K562 (cell line): ENCODE measurements at regions of chr5 and their contacts with region 1.

Region 1: GRCh38 chr5:137498736-137499505 is at the start of gene SPOCK1:
- DNase-seq: peak; percentile 67 to 92 (median 88)
- ATAC-seq: peak; percentile 100
- H3K4me3 ChIP-seq: no peak within 1 kb of the TSS
- H3K27ac ChIP-seq: no peak within 1 kb of the TSS
- H3K4me1 ChIP-seq: peaks cover 0 to 6% of the 10 kb centered on the region in 2 experiments; a peak in 1 of 5 replicates
- H3K27me3 ChIP-seq: peaks cover 0 to 3% of the 10 kb centered on the region in 2 experiments; a peak in 1 of 5 replicates
- CTCF ChIP-seq: peak; percentile 46 to 83 (median 75); a peak in 5 of 6 replicates
- EP300 ChIP-seq: no peak
- POLR2A ChIP-seq: no peak
- RAD21 ChIP-seq: peak; percentile 50 to 76; a peak in 3 of 4 replicates
- polyA plus RNA-seq, gene SPOCK1: 0.01 TPM in 1 of 2 experiments, not detected in the other

Region 2: DNA sequence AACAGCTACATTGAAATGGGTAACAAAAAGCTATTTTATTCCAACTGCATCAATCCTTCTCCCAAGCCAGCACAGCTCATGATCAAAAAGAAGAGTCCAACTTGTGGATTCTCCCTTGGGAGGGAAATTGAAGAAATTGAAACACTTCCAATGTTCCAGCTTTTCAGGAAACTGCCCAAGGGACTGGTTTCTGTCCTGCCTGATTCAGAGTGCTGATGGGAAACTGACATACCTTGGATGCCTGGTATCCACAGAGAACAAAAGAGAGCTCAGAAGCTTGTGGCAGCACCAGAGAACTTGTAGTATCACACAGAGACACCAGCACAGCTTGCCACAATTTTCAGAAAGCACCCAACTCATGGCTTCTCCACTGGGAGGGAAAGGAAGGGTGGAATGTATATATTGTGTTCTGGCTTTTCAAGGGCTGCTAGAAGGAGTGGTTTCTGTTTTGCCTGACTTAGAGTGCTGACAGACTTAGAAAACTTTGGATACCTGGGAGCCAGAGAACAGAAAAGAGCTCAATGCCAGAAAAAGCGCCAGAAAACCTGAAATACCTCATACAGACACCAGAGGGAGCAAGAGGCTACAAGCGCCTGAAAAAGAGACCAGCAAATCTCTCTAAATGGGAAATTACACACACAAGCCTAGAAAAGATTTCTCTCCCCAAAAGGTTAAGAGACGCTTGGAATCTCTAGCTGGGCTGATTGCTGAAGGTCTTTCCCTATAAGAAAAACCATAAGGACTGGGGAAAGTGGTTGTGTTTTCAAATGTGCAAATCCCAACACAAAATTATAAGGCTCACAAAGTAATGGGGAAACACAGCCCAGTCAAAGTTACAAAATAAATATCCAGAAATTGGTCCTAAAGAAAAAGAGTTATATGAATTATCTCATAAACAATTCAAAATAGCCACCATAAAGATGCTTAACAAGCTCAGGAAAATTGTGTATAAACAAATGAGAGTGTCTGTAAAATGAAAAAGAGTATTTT is 178.6 kb before region 1 on chr5:
- CTCF ChIA-PET with region 1: interaction called, 7 read pairs
- POLR2A ChIA-PET with region 1: no interaction called
- in situ Hi-C with region 1: no loop called
- intact Hi-C with region 1: loop called (anchors 1 kb)
- DNase-seq: peak; percentile 40 to 54 (median 46)
- ATAC-seq: peak; percentile 36; the same call in 1 of the 3 replicates
- H3K4me3 ChIP-seq: no peak overlapping the region
- H3K27ac ChIP-seq: no peak overlapping the region
- H3K4me1 ChIP-seq: no peaks in the 10 kb centered on the region
- H3K27me3 ChIP-seq: no peaks in the 10 kb centered on the region
- CTCF ChIP-seq: peak; percentile 63 to 72 (median 67)
- EP300 ChIP-seq: no peak
- POLR2A ChIP-seq: no peak
- RAD21 ChIP-seq: peak; percentile 30 to 68; a peak in 3 of 4 replicates

Region 3: DNA sequence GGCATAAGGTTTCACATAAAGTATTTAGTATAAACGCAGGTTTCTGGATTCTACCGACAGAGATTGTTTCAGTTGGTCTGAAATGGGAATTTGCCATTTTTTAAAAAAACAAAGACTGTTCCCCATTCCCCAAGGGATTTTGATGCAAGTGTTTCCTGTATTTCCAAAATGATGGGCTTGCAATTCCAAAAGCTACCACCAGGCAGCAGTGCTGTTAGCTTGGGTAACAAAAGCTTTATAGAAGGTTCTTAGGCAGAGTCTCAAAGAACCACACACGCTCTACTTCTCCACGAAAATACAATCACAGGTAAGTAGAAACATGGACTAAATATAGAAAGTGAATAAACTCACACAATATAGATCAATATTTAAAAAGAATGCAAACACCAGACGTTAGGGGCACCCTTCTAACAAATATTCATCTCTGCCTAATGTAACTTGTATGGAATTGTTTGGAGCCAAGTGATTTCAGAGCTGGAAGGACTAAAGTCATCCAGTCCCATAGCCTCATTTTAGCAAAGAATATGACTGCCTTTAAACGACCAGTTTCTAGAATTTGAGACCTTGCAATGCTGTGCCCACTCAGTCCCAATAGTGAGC is 154.1 kb before region 1 on chr5:
- CTCF ChIA-PET with region 1: interaction called, 6 read pairs
- POLR2A ChIA-PET with region 1: no interaction called
- in situ Hi-C with region 1: no loop called
- intact Hi-C with region 1: loop called (anchors 1 kb)
- DNase-seq: peak; percentile 28 to 57 (median 48)
- ATAC-seq: peak; percentile 61
- H3K4me3 ChIP-seq: no peak overlapping the region
- H3K27ac ChIP-seq: no peak overlapping the region
- H3K4me1 ChIP-seq: no peaks in the 10 kb centered on the region
- H3K27me3 ChIP-seq: no peaks in the 10 kb centered on the region; a peak in 1 of 5 replicates
- CTCF ChIP-seq: peak; percentile 70 to 79 (median 78); a peak in 5 of 6 replicates
- EP300 ChIP-seq: no peak
- POLR2A ChIP-seq: no peak
- RAD21 ChIP-seq: peak; percentile 33 to 65; a peak in 3 of 4 replicates